Activated CD4-positive, alpha-beta T cell treated with anti-CD3 and anti-CD28 coated beads for 36 hours (primary cell): ENCODE measurements at regions of chr17 and their contacts with region 1.

Region 1: DNA sequence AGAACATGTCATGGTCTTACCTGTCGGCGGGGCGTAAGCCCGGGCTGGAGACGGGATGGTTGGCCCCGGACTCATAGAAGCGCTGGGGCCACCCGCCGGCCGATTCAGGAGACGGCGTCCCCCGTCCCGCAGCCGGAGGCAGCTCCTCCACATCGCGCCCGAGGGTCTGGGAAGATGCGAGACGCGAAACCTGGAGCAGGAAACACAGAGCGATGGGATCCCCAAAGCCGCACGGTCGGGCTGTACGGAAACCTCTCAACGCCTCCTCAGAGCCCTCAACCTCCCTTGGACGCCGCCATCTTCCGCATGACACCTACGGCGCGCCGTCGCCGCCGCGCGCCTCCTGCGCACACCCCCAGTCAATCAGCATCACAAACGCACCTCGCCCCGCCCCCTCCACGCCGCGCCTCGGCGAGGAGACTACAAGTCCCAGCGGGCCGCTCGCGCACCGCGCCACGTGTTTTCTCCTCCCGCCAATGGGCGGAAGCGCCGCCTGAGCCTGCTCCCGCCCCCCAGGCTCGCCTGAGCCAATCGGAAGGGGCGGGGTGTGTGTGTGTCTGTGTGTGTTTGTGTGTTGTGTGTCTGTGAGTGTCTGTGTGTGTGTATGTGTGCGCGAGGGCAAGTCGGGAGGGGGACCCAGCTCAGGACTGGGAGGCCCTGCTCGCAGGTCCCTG is at the starts of genes ATPAF2 and GID4:
- DNase-seq: peak; percentile 100
- ATAC-seq: peak; percentile 91
- H3K4me3 Mint-ChIP-seq: peak within 1 kb of the TSS; percentile 91
- H3K27ac Mint-ChIP-seq: peak within 1 kb of the TSS; percentile 92
- H3K4me1 Mint-ChIP-seq: peaks cover 49% of the 10 kb centered on the region
- H3K27me3 Mint-ChIP-seq: no peaks in the 10 kb centered on the region
- total RNA-seq, gene ATPAF2: 32.9 to 40.3 TPM
- total RNA-seq, gene GID4: 6.7 to 7.7 TPM

Region 2: DNA sequence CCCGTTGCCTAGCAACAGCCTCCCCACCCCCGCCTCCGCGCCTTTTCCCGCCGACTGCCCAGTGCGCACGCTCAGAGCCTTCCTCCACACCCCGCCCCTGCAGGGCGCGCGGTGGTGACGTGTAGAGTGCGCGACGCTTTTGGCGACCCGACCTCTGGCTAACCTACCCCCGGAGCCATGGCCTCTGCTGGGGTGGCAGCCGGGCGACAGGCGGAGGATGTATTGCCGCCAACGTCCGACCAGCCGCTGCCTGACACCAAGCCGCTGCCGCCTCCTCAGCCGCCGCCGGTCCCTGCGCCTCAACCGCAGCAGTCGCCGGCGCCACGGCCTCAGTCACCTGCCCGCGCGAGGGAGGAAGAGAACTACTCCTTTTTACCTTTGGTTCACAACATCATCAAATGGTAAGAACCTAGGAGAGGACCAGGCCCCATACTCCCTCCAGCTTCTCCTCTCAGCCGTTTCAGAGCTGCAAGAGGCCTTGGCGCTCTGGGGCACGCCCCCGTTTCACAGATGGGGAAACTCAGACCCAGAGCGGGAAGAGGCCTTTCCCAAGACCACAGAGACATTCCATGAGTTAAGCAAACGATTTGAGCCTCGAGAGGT is 562.0 kb before region 1 on chr17 and contains the start of gene MED9:
- CTCF ChIA-PET with region 1: no interaction called
- POLR2A ChIA-PET with region 1: no interaction called
- intact Hi-C with region 1: loop called in 1 of 2 experiments (anchors 2 kb)
- DNase-seq: peak; percentile 97
- ATAC-seq: peak; percentile 94
- H3K4me3 Mint-ChIP-seq: peak within 1 kb of the TSS; percentile 94
- H3K27ac Mint-ChIP-seq: peak within 1 kb of the TSS; percentile 84
- H3K4me1 Mint-ChIP-seq: peaks cover 44% of the 10 kb centered on the region
- H3K27me3 Mint-ChIP-seq: no peaks in the 10 kb centered on the region
- total RNA-seq, gene MED9: 12.2 to 14.3 TPM

Region 3: GRCh38 chr17:17752089-17752820 is 286.7 kb before region 1 on chr17:
- CTCF ChIA-PET with region 1: no interaction called
- POLR2A ChIA-PET with region 1: no interaction called
- intact Hi-C with region 1: loop called (anchors 1 to 2 kb)
- DNase-seq: peak; percentile 99
- ATAC-seq: peak; percentile 89
- H3K4me3 Mint-ChIP-seq: peak overlapping the region; percentile 85
- H3K27ac Mint-ChIP-seq: peak overlapping the region; percentile 99
- H3K4me1 Mint-ChIP-seq: peaks cover 68% of the 10 kb centered on the region
- H3K27me3 Mint-ChIP-seq: no peaks in the 10 kb centered on the region

Region 4: DNA sequence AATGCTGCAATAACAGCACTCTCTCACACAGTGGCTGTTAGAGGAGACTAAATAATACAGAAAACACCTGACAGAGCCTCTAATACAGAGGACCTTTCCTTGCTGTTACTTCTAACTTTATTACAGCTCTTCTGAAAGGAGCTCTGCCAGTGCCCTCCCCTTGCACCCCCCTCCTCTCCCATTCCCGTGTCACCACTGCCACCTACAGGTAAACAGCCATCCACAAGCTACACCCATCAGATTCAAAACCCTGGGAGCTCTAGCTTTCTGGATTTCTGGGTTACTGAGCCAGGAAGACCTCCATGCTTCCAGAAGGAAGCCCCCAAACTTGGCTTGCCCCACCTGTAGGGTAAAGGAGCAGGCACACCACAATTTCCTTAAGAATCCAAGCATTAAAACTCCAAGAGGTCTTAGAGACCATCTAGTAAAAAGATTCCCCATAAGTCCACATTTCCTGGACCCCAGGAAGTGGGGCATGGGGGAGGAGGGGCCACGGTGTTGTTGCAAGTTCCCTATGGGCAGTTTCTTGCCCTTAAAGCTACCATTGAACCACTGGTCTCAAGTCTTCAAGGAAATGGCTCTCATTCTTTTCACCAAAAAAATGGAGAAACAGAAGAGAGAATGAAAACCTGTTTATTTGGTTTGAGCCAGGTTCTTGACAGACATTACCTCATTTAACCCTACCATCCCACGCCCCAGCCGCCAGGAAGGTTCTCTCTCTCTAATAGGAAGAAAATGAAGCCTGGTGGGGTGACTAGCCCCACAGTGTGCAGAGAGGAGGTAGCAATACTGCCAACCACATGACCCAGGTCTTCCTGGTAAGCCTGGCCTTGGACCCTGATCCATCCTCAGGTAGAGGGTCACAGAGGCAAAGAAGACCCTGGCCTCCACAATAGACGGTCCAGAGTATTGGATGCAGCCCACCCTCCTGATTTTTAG is 119.6 kb before region 1 on chr17:
- CTCF ChIA-PET with region 1: interaction called, 12 read pairs
- POLR2A ChIA-PET with region 1: no interaction called
- intact Hi-C with region 1: no loop called
- DNase-seq: peak; percentile 81
- ATAC-seq: peak; percentile 95
- H3K4me3 Mint-ChIP-seq: no peak overlapping the region
- H3K27ac Mint-ChIP-seq: no peak overlapping the region
- H3K4me1 Mint-ChIP-seq: peaks cover 11% of the 10 kb centered on the region
- H3K27me3 Mint-ChIP-seq: no peaks in the 10 kb centered on the region

Region 5: DNA sequence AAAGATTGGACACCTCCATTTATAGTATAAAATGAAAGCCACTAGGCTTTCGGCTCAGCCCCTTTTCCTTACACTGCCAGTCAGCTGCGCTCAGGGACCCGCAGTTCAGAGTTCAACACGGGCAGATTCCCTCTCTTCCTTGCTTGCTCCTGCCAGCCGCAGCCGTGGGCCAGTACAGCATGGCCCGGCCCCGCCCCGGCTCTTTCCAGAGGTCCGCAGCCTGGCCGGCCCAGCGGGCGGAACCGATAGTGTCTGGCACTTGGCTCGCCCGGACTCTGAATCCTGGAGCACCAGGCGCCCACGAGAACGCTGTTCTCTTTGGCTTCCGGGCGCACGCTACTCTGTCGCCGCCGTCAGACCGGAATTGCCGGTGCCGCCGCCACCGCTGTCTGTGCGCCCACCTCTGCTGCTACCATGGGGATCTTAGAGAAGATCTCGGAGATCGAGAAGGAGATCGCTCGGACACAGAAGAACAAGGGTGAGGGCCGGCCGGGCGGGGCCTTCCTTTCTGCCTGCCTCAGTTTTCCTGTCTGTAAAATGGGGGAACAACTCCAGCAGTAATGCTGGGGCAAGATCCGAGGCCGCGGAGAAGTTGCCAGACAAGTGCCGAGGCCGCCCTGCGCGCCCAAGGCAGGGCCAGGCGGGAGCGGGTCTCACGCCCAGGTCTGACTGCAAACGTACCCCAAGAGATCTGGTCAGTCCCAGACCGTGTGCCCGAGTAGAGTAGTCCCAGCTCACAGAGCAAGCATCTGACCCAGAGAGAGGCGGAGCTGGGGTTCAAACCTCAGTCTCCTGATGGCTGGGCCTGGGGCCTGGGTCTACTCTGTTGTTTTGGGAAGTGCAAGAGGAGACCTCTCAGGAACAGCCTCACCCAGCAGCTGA is 48.9 kb after region 1 on chr17 and contains the start of gene DRG2:
- CTCF ChIA-PET with region 1: interaction called, 3 read pairs
- POLR2A ChIA-PET with region 1: no interaction called
- intact Hi-C with region 1: loop called (anchors 1 to 5 kb)
- DNase-seq: peak; percentile 93
- ATAC-seq: peak; percentile 90
- H3K4me3 Mint-ChIP-seq: peak within 1 kb of the TSS; percentile 99
- H3K27ac Mint-ChIP-seq: peak within 1 kb of the TSS; percentile 98
- H3K4me1 Mint-ChIP-seq: peaks cover 22% of the 10 kb centered on the region
- H3K27me3 Mint-ChIP-seq: no peaks in the 10 kb centered on the region
- total RNA-seq, gene DRG2: 42.5 to 45.6 TPM

Region 6: DNA sequence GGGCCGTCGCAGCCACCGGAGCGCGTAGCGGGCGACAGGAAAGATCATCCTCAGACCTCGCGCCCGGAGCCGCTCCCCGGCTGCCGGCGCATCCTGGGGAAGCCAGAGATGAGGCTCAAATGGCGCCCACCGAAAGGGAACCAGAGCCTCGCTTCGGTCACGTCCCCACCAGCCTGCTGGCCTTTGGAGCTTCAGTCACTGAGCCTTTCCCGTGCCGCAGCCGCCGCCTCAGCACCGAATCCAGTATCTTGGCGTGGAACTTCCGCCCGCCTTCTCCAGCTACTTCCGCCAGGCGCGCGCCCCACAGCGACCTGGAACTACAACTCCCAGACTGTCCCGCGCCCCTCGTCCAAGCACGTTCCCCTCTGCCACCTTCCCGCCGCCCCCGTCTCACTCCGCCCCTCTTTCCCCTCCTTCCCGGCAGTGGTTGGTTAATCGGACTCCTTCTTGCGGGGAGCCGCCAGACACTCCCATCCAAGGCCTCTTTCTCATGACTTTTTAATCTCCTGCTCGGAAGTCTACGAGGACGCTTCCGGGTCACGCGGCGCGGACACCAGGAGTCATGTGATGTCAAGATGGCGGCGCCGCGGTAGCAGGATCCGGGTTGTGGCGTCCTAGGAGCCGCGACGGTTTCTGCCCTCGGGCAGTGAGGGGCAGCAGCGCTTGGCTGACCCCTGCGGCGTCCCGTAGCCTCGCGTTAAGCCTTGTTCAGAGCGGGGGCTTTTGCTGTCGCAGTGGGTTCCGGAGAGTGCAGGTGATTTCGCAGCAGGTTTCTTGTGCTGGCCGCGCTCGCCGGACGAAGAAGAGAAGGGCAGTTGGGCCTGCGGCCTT is 275.9 kb after region 1 on chr17 and contains the starts of genes SMCR8 and TOP3A:
- CTCF ChIA-PET with region 1: no interaction called
- POLR2A ChIA-PET with region 1: no interaction called
- intact Hi-C with region 1: loop called in 1 of 2 experiments (anchors 1 kb)
- DNase-seq: peak; percentile 99
- ATAC-seq: peak; percentile 95
- H3K4me3 Mint-ChIP-seq: peak within 1 kb of the TSS; percentile 85
- H3K27ac Mint-ChIP-seq: peak within 1 kb of the TSS; percentile 100
- H3K4me1 Mint-ChIP-seq: peaks cover 71% of the 10 kb centered on the region
- H3K27me3 Mint-ChIP-seq: no peaks in the 10 kb centered on the region
- total RNA-seq, gene SMCR8: 13.2 to 14.5 TPM
- total RNA-seq, gene TOP3A: 44.1 to 57.9 TPM